Heart right ventricle (tissue), 16 donors: ENCODE measurements at regions of chr17 and their contacts with region 1.

Region 1: DNA sequence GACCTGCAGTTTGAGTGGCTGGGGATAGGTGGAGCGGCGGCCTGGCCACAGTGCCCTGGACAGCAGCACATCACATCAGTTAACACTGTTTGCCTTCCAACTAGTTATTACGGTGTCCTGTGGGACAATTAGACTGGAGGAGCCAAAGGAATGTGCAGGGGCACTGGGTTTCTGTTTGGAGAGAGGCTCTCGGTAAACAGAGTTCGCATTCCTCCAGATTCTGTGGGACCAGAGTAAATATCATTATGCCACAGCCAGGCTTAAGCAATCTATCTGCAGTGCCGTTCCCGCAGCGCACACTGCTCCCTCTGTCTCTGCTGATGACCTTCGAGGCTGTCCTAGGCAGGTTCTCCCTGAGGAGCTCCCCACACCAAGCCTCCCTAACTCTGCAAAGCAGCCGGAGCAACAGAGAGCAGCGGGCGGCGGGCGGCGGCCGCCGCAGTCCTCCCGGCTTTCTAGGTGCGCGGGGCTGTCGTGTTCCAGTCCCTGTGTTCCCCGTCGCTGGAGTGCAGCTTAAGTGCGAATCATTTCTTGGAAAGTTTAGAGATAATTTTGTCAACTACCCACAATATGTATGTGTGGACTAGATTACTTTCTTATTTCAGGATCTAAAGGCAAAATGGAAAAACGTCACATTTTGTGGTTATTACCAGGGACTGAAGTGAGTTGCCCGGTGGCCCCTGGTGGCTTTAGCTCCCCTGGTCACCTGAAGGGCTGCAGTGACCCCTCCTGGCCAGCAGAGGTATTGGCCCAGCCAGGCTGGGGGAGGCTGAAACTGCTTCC is 43.2 kb downstream of the PGS1 start:
- DNase-seq: peak; percentile 76 to 80
- ATAC-seq: peak; percentile 60 to 81 (median 74)
- H3K4me3 ChIP-seq: no peak overlapping the region
- H3K27ac ChIP-seq: peak overlapping the region in 6 of 10 donors; percentile 25 to 98 (median 54)
- H3K4me1 ChIP-seq: peaks cover 20 to 62% (median 51%) of the 10 kb centered on the region in 9 donors
- H3K27me3 ChIP-seq: no peaks in the 10 kb centered on the region
- CTCF ChIP-seq: peak; percentile 98 to 100 (median 99)

Region 2: GRCh38 chr17:78112518-78113226 is 309.0 kb before region 1 on chr17:
- intact Hi-C with region 1: loop called in 1 of 10 experiments (anchors 5 kb)
- DNase-seq: peak; percentile 77 to 85
- ATAC-seq: peak; percentile 66 to 78 (median 70)
- H3K4me3 ChIP-seq: no peak overlapping the region
- H3K27ac ChIP-seq: peak overlapping the region in 8 of 10 donors; percentile 11 to 53 (median 29)
- H3K4me1 ChIP-seq: peaks cover 19 to 76% (median 31%) of the 10 kb centered on the region in 9 donors
- H3K27me3 ChIP-seq: no peaks in the 10 kb centered on the region
- CTCF ChIP-seq: peak; percentile 99 to 100 (median 100)

Region 3: DNA sequence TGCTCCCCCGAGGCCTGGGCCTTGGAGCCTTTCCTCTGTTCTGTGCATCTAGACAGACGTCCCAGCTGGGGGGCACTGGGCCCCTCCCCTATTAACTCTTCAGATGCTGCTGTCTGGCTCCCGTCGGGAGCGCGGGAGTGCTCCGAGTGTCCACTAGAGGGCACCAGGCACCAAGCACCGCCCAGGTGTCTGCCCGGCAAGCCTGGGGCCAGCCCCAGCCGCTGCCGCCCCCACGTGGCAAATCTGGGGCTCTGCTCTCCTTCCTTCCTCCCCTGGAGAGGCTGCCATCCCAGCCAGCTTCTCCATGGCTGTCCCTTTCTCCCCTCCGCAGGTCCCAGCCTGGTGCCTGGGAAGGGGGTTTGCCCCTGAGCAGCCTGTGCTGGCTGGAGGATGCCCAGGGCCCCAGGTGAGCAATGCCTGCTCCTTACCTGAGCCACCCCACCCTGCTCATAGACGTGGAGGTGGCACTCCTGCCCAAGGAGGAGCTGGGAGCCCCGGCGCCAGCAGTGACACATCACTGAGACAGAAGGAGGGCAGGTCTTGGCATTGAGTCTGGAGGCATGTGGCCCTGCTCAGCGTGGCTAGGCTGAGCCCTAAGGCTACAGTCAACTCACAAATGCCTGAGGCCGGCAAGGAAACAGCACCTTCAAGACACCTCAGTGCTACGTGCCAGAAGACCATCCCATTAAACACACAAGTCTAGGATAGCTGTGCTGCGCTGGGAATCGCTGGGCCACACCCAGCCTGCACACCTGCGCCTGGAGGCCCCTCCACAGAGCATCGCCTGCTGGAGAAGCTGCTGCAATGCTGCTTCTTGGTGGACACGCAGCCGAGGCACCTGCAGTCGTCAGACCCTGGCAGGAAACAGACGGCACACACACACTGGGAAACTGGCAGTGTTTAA is 170.5 kb before region 1 on chr17:
- intact Hi-C with region 1: loop called in 7 of 10 experiments (anchors 1 to 5 kb)
- DNase-seq: peak; percentile 82 to 87
- ATAC-seq: peak; percentile 63 to 82 (median 78)
- H3K4me3 ChIP-seq: peak overlapping the region in 1 of 10 donors; percentile 25
- H3K27ac ChIP-seq: peak overlapping the region in 1 of 10 donors; percentile 63
- H3K4me1 ChIP-seq: peaks cover 0 to 47% (median 21%) of the 10 kb centered on the region in 9 donors
- H3K27me3 ChIP-seq: no peaks in the 10 kb centered on the region
- CTCF ChIP-seq: peak; percentile 99 to 100 (median 100)

Region 4: GRCh38 chr17:78258323-78259191 is 163.1 kb before region 1 on chr17:
- intact Hi-C with region 1: loop called in 4 of 10 experiments (anchors 5 kb)
- DNase-seq: peak; percentile 62 to 75
- ATAC-seq: peak in 6 of 8 donors; percentile 45 to 57 (median 52)
- H3K4me3 ChIP-seq: peak overlapping the region in 1 of 10 donors; percentile 47
- H3K27ac ChIP-seq: peak overlapping the region in 8 of 10 donors; percentile 70 to 96 (median 81)
- H3K4me1 ChIP-seq: peaks cover 2 to 92% (median 48%) of the 10 kb centered on the region in 9 donors
- H3K27me3 ChIP-seq: no peaks in the 10 kb centered on the region
- CTCF ChIP-seq: no peak

Region 5: DNA sequence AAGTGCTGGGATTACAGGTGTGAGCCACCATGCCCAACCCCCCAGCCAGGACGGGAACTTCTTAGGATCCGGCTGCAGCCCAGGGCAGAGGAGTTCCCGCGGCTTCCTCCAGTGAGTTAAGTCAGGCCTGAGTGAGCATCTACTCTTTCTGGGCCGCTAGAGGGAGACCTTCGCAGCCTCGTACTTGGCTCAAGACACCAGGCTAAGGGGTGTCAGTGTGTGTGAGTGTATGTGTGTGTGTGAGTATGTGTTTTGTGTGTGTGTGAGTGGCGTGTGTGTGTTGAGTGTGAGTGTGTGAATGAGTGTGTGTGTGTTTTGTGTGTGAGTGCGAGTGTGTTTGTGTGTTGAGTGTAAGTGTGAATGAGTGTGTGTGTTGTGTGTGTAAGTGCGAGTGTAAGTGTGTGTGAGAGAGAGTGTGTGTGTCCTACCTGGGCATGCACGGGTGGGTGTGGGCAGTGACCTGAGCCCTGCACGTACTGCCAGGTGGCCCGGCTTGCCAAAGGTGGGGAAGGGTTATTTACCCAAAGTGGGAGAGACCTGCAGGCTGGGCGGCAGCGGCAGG is 131.8 kb before region 1 on chr17:
- intact Hi-C with region 1: loop called (anchors 1 to 5 kb)
- DNase-seq: peak; percentile 71 to 85
- ATAC-seq: peak; percentile 84 to 95 (median 92)
- H3K4me3 ChIP-seq: no peak overlapping the region
- H3K27ac ChIP-seq: no peak overlapping the region
- H3K4me1 ChIP-seq: peaks cover 0 to 28% (median 8%) of the 10 kb centered on the region in 9 donors
- H3K27me3 ChIP-seq: no peaks in the 10 kb centered on the region
- CTCF ChIP-seq: peak; percentile 61 to 85 (median 76)

Region 6: DNA sequence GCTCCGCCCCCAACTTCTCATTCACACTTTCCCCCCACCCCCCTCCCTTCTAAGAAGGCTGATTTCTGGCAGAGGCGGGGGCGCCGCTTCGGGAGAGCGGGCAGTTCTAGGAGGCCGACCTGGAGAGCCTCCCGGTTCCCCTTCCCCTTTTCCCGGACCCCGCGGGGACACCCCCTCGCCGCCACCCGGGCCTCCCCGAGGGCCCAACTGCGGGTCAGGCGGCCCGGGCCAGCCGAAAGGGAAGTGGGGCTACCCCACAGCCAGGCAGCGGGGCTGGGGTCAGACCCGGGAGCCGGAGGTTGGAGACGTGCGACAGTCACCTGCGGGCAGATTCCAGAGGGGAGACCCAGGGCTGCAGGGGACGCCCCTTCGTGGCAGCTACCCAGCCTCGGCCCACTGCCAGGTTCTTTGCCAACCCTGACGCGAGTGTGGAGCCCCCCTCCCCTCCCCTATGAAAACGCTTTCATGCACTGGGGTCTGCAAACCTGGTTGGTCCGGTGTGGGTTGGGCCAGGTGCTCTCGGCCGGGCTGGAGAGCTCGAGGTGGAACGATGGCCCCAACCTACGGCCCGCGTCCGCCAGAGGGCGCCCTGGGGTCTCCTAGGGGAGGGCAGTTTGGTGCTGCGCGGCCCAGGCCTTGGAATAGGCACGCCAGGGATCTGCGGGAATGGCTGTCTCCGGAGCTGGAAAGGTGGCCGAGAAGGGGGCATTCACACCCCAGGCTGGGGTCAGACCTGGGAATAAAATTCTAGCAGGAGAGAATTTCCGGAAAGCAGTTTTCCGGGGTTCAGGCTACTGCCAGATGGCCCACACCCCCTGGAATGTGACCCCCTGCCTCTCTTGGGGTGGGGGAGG is 61.1 kb before region 1 on chr17:
- intact Hi-C with region 1: loop called (anchors 1 to 5 kb)
- DNase-seq: peak; percentile 94 to 97
- ATAC-seq: peak; percentile 63 to 82 (median 76)
- H3K4me3 ChIP-seq: peak overlapping the region; percentile 3 to 94 (median 77)
- H3K27ac ChIP-seq: peak overlapping the region; percentile 57 to 100 (median 96)
- H3K4me1 ChIP-seq: peaks cover 15 to 54% (median 47%) of the 10 kb centered on the region in 9 donors
- H3K27me3 ChIP-seq: no peaks in the 10 kb centered on the region
- CTCF ChIP-seq: peak; percentile 85 to 96 (median 93)

Region 7: DNA sequence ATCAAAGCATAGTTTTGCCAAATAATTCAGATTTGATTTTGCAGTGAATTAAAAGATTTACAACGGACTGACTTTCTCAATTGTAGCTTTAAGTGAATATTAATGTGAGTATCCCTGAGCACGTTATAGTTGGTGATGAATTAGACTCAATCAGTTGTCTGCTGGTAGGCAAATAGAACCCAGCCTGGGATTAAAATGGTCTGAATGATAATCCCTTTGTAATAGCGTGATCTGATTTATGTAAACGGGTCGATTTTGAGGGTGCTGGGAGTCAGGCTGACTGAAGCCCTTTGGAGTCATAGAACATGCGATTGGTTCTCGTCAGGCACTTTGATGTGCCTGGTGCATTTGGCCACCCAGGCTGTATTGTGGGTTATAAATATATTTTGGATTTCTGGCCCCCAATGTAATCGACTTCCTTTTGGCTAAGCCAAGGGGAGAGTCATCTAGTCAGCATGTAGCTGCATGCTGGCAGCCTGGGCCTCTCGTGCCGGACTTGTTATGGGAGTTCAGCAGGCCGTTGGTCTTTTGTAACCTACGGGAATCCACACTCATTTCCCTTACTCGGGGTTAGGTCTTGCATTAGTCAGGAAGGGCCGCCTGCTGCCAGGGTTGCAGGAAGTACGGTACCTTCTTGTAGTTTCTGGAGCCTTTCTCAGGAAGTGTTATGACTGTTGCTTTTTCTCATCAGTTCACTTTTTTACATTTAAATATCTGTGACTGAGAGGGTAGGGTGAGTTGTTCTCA is 37.8 kb before region 1 on chr17:
- intact Hi-C with region 1: loop called in 1 of 10 experiments (anchors 5 kb)
- DNase-seq: peak; percentile 71 to 75
- ATAC-seq: peak; percentile 59 to 90 (median 76)
- H3K4me3 ChIP-seq: peak overlapping the region in 1 of 10 donors; percentile 6
- H3K27ac ChIP-seq: peak overlapping the region; percentile 8 to 99 (median 70)
- H3K4me1 ChIP-seq: peaks cover 20 to 100% (median 98%) of the 10 kb centered on the region in 9 donors
- H3K27me3 ChIP-seq: no peaks in the 10 kb centered on the region
- CTCF ChIP-seq: no peak